Caco-2 (cell line): ENCODE measurements at regions of chr5 and their contacts with region 1.

Region 1: GRCh38 chr5:160021831-160022446 is 13.0 kb downstream of the TTC1 start:
- DNase-seq: peak; percentile 56 to 71
- H3K4me3 ChIP-seq: no peak overlapping the region
- H3K4me3 Mint-ChIP-seq: no peak overlapping the region
- H3K27ac Mint-ChIP-seq: no peak overlapping the region
- H3K4me1 ChIP-seq: no peaks in the 10 kb centered on the region
- H3K4me1 Mint-ChIP-seq: peaks cover 7% of the 10 kb centered on the region
- H3K27me3 ChIP-seq: no peaks in the 10 kb centered on the region
- H3K27me3 Mint-ChIP-seq: no peaks in the 10 kb centered on the region
- CTCF ChIP-seq: peak; percentile 77 to 85

Region 2: GRCh38 chr5:159878988-159879471 is 142.9 kb before region 1 on chr5:
- CTCF ChIA-PET with region 1: no interaction called
- POLR2A ChIA-PET with region 1: no interaction called
- intact Hi-C with region 1: no loop called
- DNase-seq: peak; percentile 69 to 76
- H3K4me3 ChIP-seq: no peak overlapping the region
- H3K4me3 Mint-ChIP-seq: no peak overlapping the region
- H3K27ac Mint-ChIP-seq: no peak overlapping the region
- H3K4me1 ChIP-seq: no peaks in the 10 kb centered on the region; the same call in 1 of the 2 replicates
- H3K4me1 Mint-ChIP-seq: peaks cover 11% of the 10 kb centered on the region
- H3K27me3 ChIP-seq: no peaks in the 10 kb centered on the region
- H3K27me3 Mint-ChIP-seq: peaks cover 24% of the 10 kb centered on the region
- CTCF ChIP-seq: peak in 1 of 2 experiments; percentile 25

Region 3: GRCh38 chr5:160064995-160065630 is 43.2 kb after region 1 on chr5:
- CTCF ChIA-PET with region 1: interaction called, 14 read pairs
- POLR2A ChIA-PET with region 1: interaction called, 3 read pairs
- intact Hi-C with region 1: loop called (anchors 2 kb)
- DNase-seq: peak; percentile 84 to 93
- H3K4me3 ChIP-seq: no peak overlapping the region
- H3K4me3 Mint-ChIP-seq: peak overlapping the region; percentile 60
- H3K27ac Mint-ChIP-seq: peak overlapping the region; percentile 86
- H3K4me1 ChIP-seq: peaks cover 30% of the 10 kb centered on the region
- H3K4me1 Mint-ChIP-seq: peaks cover 13% of the 10 kb centered on the region
- H3K27me3 ChIP-seq: no peaks in the 10 kb centered on the region
- H3K27me3 Mint-ChIP-seq: no peaks in the 10 kb centered on the region
- CTCF ChIP-seq: no peak

Region 4: GRCh38 chr5:160119142-160119904 is 97.4 kb after region 1 on chr5 and contains the start of gene PWWP2A:
- CTCF ChIA-PET with region 1: no interaction called
- POLR2A ChIA-PET with region 1: interaction called, 4 read pairs
- intact Hi-C with region 1: loop called (anchors 1 kb)
- DNase-seq: peak; percentile 98 to 99
- H3K4me3 ChIP-seq: peak within 1 kb of the TSS; percentile 91
- H3K4me3 Mint-ChIP-seq: peak within 1 kb of the TSS; percentile 93
- H3K27ac Mint-ChIP-seq: peak within 1 kb of the TSS; percentile 93
- H3K4me1 ChIP-seq: peaks cover 7% of the 10 kb centered on the region; the same call in 1 of the 2 replicates
- H3K4me1 Mint-ChIP-seq: peaks cover 10% of the 10 kb centered on the region
- H3K27me3 ChIP-seq: no peaks in the 10 kb centered on the region
- H3K27me3 Mint-ChIP-seq: no peaks in the 10 kb centered on the region
- CTCF ChIP-seq: peak in 1 of 2 experiments; percentile 9
- total RNA-seq, gene PWWP2A: 34.4 and 36.7 TPM in 2 replicates

Region 5: GRCh38 chr5:160390787-160391696 is 369.1 kb after region 1 on chr5:
- CTCF ChIA-PET with region 1: interaction called, 16 read pairs
- POLR2A ChIA-PET with region 1: no interaction called
- intact Hi-C with region 1: loop called (anchors 1 kb)
- DNase-seq: no peak
- H3K4me3 ChIP-seq: no peak overlapping the region
- H3K4me3 Mint-ChIP-seq: no peak overlapping the region
- H3K27ac Mint-ChIP-seq: no peak overlapping the region
- H3K4me1 ChIP-seq: no peaks in the 10 kb centered on the region
- H3K4me1 Mint-ChIP-seq: no peaks in the 10 kb centered on the region
- H3K27me3 ChIP-seq: no peaks in the 10 kb centered on the region
- H3K27me3 Mint-ChIP-seq: no peaks in the 10 kb centered on the region
- CTCF ChIP-seq: peak; percentile 43 to 49